PC-3 (cell line): ENCODE measurements at regions of chr17 and their contacts with region 1.

Region 1: GRCh38 chr17:72079700-72080099 is 41.1 kb upstream of the SOX9 start:
- DNase-seq: peak; percentile 80
- ATAC-seq: peak; percentile 97
- H3K4me3 ChIP-seq: no peak overlapping the region
- H3K27ac ChIP-seq: no peak overlapping the region
- H3K4me1 ChIP-seq: peaks cover 14% of the 10 kb centered on the region
- H3K27me3 ChIP-seq: no peaks in the 10 kb centered on the region
- CTCF ChIP-seq: no peak

Region 2: DNA sequence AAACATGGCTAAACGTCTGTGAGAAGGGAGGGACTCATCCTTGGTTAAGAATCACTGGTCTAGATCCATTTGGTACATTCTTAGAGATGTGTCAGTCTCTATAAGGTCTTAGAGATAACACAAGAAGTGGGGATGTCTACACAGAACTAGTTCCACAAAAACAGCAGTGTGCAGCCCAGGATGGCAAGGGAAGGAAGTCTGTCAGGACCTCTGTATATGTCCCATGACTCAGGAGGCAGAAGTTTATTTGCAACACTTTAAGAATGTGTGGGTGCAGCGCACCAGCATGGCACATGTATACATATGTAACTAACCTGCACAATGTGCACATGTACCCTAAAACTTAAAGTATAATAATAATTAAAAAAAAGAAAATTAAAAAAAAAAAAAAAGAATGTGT is 507.4 kb before region 1 on chr17:
- CTCF ChIA-PET with region 1: no interaction called
- POLR2A ChIA-PET with region 1: interaction called, 11 read pairs
- intact Hi-C with region 1: no loop called
- DNase-seq: peak; percentile 25
- ATAC-seq: peak; percentile 33
- H3K4me3 ChIP-seq: no peak overlapping the region
- H3K27ac ChIP-seq: no peak overlapping the region
- H3K4me1 ChIP-seq: 0 out of 2 replicates have a peak, but pooled peaks cover 3% of the 10 kb centered on the region
- H3K27me3 ChIP-seq: no peaks in the 10 kb centered on the region
- CTCF ChIP-seq: no peak